Activated T-helper 2 cell treated with anti-CD3 and anti-CD28 coated beads, Interferon-gamma antibody, Interleukin-2, Interleukin-4, amounts not matched to agents 10 μg/mL and 5 μg/mL and 100 μg/mL, durations not matched to agents 14 hours and 24 hours and 36 hours (primary cell): ENCODE measurements at regions of chr17 and their contacts with region 1.

Region 1: GRCh38 chr17:66304304-66305174 is 2.1 kb downstream of the PRKCA start:
- DNase-seq: no peak
- H3K4me3 Mint-ChIP-seq: peak overlapping the region; percentile 100
- H3K27ac Mint-ChIP-seq: peak overlapping the region; percentile 97
- H3K4me1 Mint-ChIP-seq: peaks cover 50% of the 10 kb centered on the region
- H3K27me3 Mint-ChIP-seq: no peaks in the 10 kb centered on the region

Region 2: GRCh38 chr17:65956814-65957213 is 347.7 kb before region 1 on chr17:
- intact Hi-C with region 1: no loop called
- DNase-seq: no peak
- H3K4me3 Mint-ChIP-seq: no peak overlapping the region
- H3K27ac Mint-ChIP-seq: no peak overlapping the region
- H3K4me1 Mint-ChIP-seq: no peaks in the 10 kb centered on the region
- H3K27me3 Mint-ChIP-seq: no peaks in the 10 kb centered on the region

Region 3: DNA sequence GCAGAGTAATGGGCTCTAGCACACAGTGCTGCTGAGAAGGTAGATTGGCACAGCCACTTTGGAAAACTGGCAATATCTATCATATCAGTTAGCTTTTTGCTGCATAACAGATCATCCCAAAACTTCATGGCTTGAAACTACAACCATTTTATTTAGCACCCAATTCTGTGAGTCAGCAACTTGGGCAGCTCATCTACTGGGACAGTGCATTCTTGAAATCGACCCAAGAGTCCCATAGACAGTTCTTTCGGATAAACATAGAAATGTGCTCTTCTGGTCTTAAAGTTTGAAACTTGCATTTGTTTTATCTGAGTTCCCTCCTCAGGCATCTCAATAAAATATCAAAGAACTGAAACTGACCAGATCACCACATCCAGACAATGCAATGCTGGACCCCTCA is 189.3 kb before region 1 on chr17:
- intact Hi-C with region 1: no loop called
- DNase-seq: no peak
- H3K4me3 Mint-ChIP-seq: no peak overlapping the region
- H3K27ac Mint-ChIP-seq: no peak overlapping the region
- H3K4me1 Mint-ChIP-seq: no peaks in the 10 kb centered on the region
- H3K27me3 Mint-ChIP-seq: peaks cover 3% of the 10 kb centered on the region

Region 4: DNA sequence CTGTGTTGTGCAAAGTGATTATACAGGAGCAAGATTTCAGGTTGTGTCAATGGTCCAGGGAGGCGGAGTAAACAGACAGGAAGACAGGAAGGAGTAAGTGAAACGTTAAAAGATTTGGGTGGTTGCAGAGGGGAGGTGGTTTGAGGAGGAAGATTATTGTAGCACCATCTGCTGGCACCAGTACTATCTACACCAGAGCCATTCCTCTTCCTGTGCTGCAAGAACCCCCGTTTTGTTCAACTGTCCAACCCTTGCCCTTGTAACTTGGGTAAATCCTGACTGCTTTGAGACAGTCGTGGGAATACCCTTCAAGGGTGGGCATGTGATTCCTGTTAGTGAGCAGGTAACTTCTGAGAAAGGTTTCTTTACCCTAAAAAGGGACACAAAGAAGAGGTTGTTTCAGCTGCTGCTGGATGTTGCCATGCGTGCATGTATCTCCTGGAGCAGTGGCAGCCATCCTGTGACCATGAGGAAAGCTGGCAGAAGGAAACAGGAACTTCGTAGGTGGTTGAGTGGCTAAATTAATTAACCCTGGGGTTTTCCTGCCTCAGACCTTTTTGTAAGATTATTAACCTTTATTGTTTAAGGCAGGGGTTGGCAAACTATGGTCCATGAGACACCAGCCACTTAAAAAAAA is 122.0 kb after region 1 on chr17:
- intact Hi-C with region 1: loop called (anchors 2 kb)
- DNase-seq: peak; percentile 40
- H3K4me3 Mint-ChIP-seq: peak overlapping the region; percentile 14
- H3K27ac Mint-ChIP-seq: peak overlapping the region; percentile 62
- H3K4me1 Mint-ChIP-seq: peaks cover 70% of the 10 kb centered on the region
- H3K27me3 Mint-ChIP-seq: no peaks in the 10 kb centered on the region

Region 5: DNA sequence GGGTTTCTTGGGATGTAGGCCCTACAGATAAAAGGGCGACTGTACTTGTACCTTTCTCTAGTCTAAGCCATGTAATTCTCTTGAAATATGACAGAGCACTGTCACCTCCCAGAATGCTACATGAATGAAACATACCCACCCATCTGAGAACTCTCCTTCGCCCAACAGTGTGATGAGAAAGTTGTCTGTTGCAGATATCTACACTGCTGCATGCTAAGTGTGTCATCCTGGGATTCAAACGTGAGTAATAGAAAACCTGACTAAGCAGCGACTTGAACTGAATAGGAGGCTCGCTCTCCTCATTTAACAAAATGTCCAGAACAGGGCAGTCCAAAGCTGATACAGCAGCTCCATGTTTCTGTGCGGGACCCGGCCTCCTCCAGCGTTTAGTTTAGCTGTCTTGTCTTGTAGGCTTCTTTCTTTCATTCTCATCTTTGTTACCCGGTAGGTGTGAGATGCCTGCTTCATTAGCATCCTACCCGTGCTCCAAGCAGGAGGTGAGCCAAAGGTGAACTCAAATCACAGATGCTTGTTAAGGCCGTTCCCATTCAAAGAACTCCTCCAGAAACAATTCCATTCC is 209.8 kb after region 1 on chr17:
- intact Hi-C with region 1: loop called (anchors 5 kb)
- DNase-seq: no peak
- H3K4me3 Mint-ChIP-seq: no peak overlapping the region
- H3K27ac Mint-ChIP-seq: peak overlapping the region; percentile 69
- H3K4me1 Mint-ChIP-seq: peaks cover 70% of the 10 kb centered on the region
- H3K27me3 Mint-ChIP-seq: no peaks in the 10 kb centered on the region